Heart left ventricle (tissue), 16 donors: ENCODE measurements at regions of chr12 and their contacts with region 1.

Region 1: DNA sequence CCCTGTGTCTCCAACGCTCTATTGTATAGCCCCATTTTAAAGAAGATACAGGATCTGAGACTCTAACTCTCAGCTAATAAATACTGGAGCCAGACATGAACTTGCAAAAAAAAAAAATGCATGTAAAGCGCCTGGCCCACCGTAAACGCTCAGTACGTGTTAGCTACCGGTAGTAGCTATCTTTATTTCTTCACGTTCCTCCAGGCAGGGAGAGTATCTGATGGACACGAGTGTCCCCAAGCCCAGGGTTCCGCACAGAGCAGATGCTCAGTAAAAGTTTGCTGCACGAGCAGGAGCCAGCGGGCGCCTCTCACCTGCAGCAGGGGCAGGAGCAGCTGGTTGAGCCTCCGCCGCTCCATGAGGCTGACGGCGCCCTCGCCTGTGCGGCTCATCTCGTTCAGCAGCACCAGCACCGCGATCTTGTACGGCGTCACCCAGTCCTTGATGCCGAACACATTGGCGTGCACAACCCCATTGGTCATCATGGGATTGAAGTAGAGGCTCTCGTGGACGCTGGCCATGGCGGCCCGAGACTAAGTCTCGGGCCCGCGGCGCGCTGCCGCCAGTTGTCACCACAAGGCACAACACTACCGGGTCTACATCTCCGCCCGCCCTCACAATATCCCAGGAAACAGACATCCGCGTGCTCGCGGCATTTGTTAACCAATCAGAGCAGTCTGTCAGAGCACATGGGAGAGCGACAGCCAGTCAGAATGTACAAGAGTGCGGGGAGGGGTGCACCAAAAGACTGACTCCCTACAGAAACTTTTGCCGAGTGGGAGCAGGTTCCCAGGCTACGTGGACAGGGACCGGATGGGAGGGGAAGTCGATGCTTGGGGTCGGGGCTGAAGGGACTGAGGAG is at the start of gene ANAPC5:
- DNase-seq: peak; percentile 94 to 97 (median 96)
- ATAC-seq: peak; percentile 100
- H3K4me3 ChIP-seq: peak within 1 kb of the TSS; percentile 52 to 100 (median 92)
- H3K27ac ChIP-seq: peak within 1 kb of the TSS; percentile 6 to 89 (median 82)
- H3K4me1 ChIP-seq: peaks cover 0 to 28% (median 16%) of the 10 kb centered on the region in 12 donors
- H3K27me3 ChIP-seq: no peaks in the 10 kb centered on the region
- CTCF ChIP-seq: peak in 1 of 12 donors; percentile 27
- POLR2A ChIP-seq: peak in 1 of 2 donors; percentile 87
- total RNA-seq, gene ANAPC5: 55.0 to 81.1 (median 59.1) TPM

Region 2: GRCh38 chr12:120922279-120922678 is 429.8 kb before region 1 on chr12:
- intact Hi-C with region 1: no loop called
- DNase-seq: no peak
- ATAC-seq: no peak
- H3K4me3 ChIP-seq: no peak overlapping the region
- H3K27ac ChIP-seq: no peak overlapping the region
- H3K4me1 ChIP-seq: no peaks in the 10 kb centered on the region
- H3K27me3 ChIP-seq: no peaks in the 10 kb centered on the region
- CTCF ChIP-seq: no peak
- POLR2A ChIP-seq: no peak

Region 3: DNA sequence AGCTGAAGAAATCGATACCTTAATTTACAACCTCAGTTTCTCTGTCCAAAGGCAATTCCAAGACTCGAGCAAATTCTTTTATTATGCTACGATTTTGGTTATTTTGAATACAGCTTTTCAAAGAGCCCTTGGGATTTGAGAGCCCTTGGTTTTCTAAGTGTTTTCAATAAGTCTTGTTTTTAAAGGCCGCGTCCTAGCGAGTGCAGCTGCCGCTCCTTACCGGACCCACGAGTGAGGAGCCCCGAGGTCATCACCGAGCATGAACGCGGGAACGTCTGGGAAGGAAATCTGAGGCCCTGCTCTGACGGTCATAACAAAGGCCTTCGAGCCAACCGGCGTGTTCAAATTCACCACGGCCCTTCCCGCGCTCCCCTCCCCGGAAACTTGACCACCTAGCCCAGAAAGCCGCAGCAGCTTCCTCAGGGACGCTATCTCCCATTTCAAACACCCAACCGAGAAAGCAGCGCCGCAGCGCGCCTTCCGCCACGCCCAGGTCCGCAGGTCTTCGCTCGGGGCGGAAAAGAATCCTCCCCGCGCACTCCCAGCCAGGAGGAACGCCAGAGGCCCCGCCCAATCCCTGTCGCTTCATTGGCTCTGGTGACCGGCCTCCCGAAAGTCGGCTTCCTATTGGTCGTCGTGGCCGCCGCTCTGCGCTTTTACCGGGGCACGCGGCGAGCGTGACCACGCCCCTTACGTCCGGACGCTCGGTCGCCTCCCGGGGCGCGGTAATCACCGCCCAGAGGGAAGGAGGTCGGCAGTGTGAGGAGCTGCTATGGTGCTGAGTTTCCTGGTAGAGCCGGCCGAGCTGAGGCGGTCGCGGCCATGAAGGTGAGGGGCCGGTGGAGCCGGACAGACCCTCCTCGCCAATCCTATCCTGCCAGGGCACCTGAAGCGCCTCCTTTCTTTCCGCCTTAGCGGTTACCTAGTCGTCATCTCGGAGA is 47.6 kb after region 1 on chr12 and contains the start of gene RNF34:
- intact Hi-C with region 1: loop called in 8 of 10 experiments (anchors 1 to 5 kb)
- DNase-seq: peak; percentile 99 to 100 (median 99)
- ATAC-seq: peak; percentile 99 to 100 (median 99)
- H3K4me3 ChIP-seq: peak within 1 kb of the TSS; percentile 77 to 100 (median 94)
- H3K27ac ChIP-seq: peak within 1 kb of the TSS; percentile 70 to 95 (median 92)
- H3K4me1 ChIP-seq: peaks cover 0 to 36% (median 22%) of the 10 kb centered on the region in 12 donors
- H3K27me3 ChIP-seq: no peaks in the 10 kb centered on the region
- CTCF ChIP-seq: peak in 3 of 12 donors; percentile 17 to 33 (median 23)
- POLR2A ChIP-seq: peak; percentile 89 to 97
- total RNA-seq, gene RNF34: 20.2 to 31.5 (median 25.7) TPM

Region 4: DNA sequence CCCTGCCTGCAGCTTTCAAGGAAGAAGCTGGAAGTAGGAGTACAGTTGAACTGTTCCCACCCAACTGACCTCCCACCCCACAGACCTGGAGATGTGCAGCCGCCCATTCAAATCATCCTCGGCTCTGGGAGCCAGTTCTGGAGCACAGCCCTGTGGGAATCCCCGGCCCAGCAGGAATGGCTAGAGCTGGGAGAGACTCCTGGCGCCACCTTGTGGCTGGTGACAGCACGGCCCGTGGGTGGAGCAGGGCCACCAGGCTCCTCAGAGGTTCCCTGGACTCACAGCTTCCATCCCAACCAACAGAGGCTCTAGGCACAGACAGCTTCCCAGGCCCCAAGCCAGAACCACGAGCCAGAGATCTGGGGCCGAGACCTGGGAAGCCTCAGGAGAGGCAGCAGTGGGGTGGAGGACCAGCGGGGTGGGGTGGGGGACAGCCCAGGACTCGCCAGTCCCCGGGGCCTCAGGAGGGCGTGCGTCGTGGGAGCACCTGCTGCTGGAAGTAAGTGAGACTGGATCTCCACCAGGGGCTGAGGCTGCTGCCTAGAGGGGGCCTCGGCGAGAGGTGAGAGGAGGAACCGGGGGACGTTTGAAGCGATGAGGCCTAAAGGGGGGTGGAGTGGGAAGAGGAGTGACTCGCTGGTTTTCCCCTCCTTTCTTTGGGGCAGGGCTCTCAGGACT is 91.3 kb after region 1 on chr12:
- intact Hi-C with region 1: loop called in 1 of 10 experiments (anchors 1 kb)
- DNase-seq: peak; percentile 76 to 92 (median 89)
- ATAC-seq: peak; percentile 89 to 94 (median 92)
- H3K4me3 ChIP-seq: no peak overlapping the region
- H3K27ac ChIP-seq: peak overlapping the region in 1 of 12 donors; percentile 30
- H3K4me1 ChIP-seq: peaks cover 0 to 9% (median 0%) of the 10 kb centered on the region in 12 donors
- H3K27me3 ChIP-seq: no peaks in the 10 kb centered on the region
- CTCF ChIP-seq: peak; percentile 73 to 92 (median 84)
- POLR2A ChIP-seq: no peak